IMR-90 (cell line): ENCODE measurements at regions of chrX and their contacts with region 1.

Region 1: DNA sequence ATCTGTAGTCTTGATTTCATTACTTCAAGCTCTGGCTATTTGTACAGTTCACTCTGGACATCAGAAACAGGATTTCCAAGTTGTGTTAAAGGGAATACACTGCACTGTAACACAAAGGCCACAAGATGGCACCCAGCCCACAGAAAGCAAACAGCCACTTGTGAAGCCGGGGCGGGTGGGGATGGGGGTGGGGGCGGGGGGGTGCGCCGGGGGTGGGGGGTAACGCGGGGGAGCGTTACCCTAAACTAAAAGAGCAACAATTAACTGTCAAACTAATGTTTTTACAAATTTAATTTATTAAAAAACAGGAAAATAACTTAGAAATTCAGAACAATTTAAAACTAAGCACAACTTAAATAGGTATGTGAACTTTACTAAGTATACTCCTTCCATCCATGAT is 27.3 kb downstream of the PRDX4 start:
- DNase-seq: peak; percentile 57
- ATAC-seq: peak; percentile 96
- H3K4me3 ChIP-seq: no peak overlapping the region
- H3K27ac ChIP-seq: no peak overlapping the region
- H3K4me1 ChIP-seq: no peaks in the 10 kb centered on the region
- H3K27me3 ChIP-seq: no peaks in the 10 kb centered on the region
- CTCF ChIP-seq: peak; percentile 61
- POLR2A ChIP-seq: no peak
- RAD21 ChIP-seq: peak; percentile 66

Region 2: DNA sequence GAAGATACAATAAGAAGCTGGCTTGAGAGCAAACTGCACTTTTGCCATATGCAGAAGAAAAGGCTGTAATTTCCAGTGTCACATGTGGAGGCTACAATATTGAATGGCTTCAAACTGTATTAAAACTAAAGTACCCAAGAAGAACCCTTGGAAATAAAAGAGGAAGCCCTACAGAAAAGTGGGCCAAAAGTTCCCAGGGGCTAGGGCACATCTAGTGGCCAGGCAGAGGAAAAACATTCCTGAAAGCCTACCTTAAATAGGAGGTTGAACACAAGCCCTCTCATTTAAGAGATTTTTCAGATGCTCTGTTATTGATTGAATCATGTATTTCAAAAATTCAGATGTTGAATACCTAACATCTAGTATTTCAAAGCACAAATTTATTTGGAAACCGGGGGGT is 68.0 kb before region 1 on chrX:
- CTCF ChIA-PET with region 1: no interaction called
- POLR2A ChIA-PET with region 1: no interaction called
- dilution Hi-C with region 1: no loop called
- in situ Hi-C with region 1: no loop called
- intact Hi-C with region 1: no loop called
- DNase-seq: no peak
- ATAC-seq: no peak
- H3K4me3 ChIP-seq: no peak overlapping the region
- H3K27ac ChIP-seq: no peak overlapping the region
- H3K4me1 ChIP-seq: no peaks in the 10 kb centered on the region
- H3K27me3 ChIP-seq: peaks cover 2% of the 10 kb centered on the region; the same call in 1 of the 2 replicates
- CTCF ChIP-seq: no peak
- POLR2A ChIP-seq: no peak
- RAD21 ChIP-seq: no peak

Region 3: GRCh38 chrX:23756157-23756559 is 61.6 kb after region 1 on chrX:
- CTCF ChIA-PET with region 1: no interaction called
- POLR2A ChIA-PET with region 1: no interaction called
- dilution Hi-C with region 1: no loop called
- in situ Hi-C with region 1: no loop called
- intact Hi-C with region 1: no loop called
- DNase-seq: peak; percentile 41
- ATAC-seq: no peak
- H3K4me3 ChIP-seq: no peak overlapping the region
- H3K27ac ChIP-seq: no peak overlapping the region
- H3K4me1 ChIP-seq: no peaks in the 10 kb centered on the region
- H3K27me3 ChIP-seq: no peaks in the 10 kb centered on the region
- CTCF ChIP-seq: peak; percentile 47
- POLR2A ChIP-seq: no peak
- RAD21 ChIP-seq: peak; percentile 35

Region 4: GRCh38 chrX:24150051-24150790 is 455.6 kb after region 1 on chrX:
- CTCF ChIA-PET with region 1: no interaction called
- POLR2A ChIA-PET with region 1: no interaction called
- dilution Hi-C with region 1: no loop called
- in situ Hi-C with region 1: loop called (anchors 25 kb)
- intact Hi-C with region 1: no loop called
- DNase-seq: peak; percentile 92
- ATAC-seq: peak; percentile 79
- H3K4me3 ChIP-seq: peak overlapping the region; percentile 98
- H3K27ac ChIP-seq: peak overlapping the region; percentile 100
- H3K4me1 ChIP-seq: peaks cover 8% of the 10 kb centered on the region
- H3K27me3 ChIP-seq: no peaks in the 10 kb centered on the region
- CTCF ChIP-seq: peak; percentile 61
- POLR2A ChIP-seq: peak; percentile 59
- RAD21 ChIP-seq: peak; percentile 45

Region 5: DNA sequence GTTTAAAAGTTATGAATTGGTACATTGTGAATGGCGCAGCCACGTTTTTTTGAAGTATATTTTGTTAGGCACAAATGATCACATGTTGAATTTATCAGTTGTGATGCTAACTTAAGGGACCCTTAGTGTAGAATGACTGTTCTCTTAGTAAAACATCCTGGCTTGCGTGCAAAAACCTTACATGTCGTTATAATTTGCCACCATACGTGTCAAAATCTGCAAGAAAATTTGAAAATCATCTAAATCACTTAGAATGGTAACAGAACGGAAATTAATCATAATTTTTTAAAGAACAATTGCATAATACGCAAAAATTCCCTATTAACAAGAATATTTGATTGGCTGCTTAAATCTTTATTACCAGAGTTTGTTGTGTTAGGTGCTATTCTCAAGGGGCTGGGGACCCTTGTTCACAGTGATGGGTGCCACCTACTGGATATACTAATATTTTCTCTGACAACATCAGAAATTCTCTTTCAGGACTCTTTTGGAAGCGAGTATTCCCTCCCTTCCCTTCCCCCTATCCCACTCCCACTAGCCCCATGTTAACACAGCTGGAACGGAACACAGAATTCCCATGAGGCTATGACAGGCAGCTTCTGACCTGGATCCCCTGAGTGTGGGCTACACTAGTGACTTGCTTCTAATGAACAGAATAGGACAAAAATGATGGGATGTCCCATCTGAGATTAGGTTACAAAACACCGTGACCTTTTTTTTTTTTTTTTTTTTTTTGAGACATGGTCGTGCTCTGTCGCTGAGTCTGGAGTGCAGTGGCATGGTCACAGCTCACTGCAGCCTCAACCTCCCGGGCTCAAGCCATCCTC is 547.4 kb after region 1 on chrX:
- CTCF ChIA-PET with region 1: no interaction called
- POLR2A ChIA-PET with region 1: no interaction called
- dilution Hi-C with region 1: no loop called
- in situ Hi-C with region 1: no loop called
- intact Hi-C with region 1: loop called (anchors 10 kb)
- DNase-seq: peak; percentile 39
- ATAC-seq: peak; percentile 65; the same call in 1 of the 2 replicates
- H3K4me3 ChIP-seq: no peak overlapping the region
- H3K27ac ChIP-seq: no peak overlapping the region
- H3K4me1 ChIP-seq: no peaks in the 10 kb centered on the region
- H3K27me3 ChIP-seq: peaks cover 4% of the 10 kb centered on the region; the same call in 1 of the 2 replicates
- CTCF ChIP-seq: peak; percentile 49
- POLR2A ChIP-seq: no peak
- RAD21 ChIP-seq: peak; percentile 57